ENCODE measurements at regions of chr6 and their contacts with region 1.

Region 1: DNA sequence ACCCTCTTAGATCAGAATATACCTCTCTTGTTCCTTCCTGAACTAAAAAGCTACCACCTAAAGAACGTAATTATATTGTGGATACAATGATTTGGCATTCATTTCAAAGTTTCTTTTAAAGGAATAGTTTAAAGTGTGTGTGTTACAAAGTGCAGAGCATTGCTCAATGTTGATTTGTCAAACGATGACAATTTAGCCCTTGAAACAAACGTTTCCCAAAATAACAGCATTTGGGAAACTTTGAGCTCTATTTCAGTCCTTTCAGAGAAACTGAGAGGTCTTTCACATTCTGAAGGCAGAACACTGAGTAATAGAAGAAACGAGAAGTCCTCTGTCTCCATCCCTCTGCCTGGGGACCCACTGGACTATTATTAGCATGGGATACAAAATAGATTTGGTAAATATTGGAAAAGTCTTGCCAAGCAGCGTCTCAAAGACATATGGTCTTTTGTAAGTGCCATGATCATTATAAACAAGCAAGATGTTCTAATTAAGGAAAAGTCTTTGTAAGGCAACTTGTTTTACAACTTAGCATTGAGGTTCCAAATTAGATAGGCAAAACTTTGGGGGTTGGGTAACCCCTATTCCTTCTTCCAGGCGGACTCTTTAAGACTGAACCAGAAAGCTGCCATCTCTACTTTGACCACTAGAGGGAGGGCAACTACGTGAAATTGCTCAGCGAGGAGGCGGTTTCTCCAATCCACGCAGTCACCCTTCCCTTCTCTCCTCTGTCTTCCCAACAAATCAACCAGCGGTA is 208.8 kb downstream of the RNF144B start:
- DNase-seq: no peak
- ATAC-seq: peak; percentile 77

Region 2: DNA sequence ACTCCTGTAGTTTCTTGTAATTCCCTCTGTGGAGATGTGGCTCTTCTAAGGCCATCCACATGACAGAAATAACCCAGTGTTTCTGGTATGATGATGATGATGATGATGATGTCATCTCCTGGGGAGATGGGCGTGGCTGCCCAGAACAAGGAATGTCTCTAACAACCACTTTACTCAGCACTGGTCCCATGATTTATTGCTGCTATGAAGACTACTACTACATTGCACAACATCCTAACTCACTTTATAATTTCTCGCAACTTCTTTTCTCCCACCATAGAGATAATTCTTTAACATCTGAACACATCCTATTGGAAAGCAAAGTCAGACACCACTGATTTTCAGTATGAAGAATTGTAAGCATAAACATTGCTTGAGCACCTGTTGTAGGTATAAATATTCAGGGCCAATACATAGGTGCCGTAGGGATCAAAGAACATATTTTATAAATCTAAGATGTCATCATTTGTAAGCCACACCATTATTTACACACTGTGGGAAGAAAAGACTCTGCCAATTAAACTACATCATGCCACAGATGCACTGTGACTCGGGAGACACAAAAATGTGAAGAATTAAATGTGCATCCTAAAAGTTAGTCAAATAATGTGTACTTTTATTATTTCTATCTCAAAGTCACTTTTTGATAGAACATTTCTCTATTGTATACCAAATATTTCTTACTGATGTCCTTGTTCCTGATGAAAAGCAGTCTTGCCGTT is 447.5 kb before region 1 on chr6:
- intact Hi-C with region 1: no loop called
- DNase-seq: no peak
- ATAC-seq: no peak

Region 3: DNA sequence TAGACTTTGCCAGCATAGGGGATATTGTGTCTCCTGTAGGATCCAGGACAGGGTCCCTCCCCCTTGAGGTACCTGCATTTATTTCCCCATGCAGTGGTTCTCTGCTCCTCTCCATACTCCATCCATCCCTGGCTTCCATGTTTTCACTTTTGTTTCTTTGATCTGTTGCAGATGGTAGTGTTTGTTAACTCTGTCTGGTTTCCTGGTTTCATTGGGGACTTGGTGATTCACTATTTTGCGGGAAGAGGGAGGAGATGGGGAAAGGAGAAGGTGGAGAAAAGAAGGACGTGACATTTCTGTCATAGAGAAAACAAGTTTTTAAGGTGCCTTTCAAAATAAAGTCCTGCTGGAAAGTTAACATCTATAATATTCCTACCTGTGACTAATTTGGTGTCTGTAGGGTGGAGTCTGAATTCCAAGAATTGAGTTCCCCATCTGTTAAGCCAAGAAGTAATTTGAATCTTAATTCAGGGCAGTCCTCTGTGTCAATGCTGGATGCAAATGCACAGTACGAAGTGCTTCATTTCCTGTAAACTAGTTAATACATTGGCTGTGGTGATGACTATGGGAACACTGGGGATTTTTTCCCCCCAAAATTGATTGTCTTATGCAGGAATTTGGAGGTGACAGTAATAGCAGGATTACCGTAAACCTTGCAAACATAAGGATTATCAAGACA is 215.7 kb before region 1 on chr6:
- intact Hi-C with region 1: no loop called
- DNase-seq: no peak
- ATAC-seq: no peak

Region 4: GRCh38 chr6:18720075-18720474 is 124.1 kb after region 1 on chr6:
- intact Hi-C with region 1: no loop called
- DNase-seq: no peak
- ATAC-seq: no peak

Region 5: GRCh38 chr6:18763086-18763485 is 167.1 kb after region 1 on chr6:
- intact Hi-C with region 1: no loop called
- DNase-seq: no peak
- ATAC-seq: no peak

Region 6: DNA sequence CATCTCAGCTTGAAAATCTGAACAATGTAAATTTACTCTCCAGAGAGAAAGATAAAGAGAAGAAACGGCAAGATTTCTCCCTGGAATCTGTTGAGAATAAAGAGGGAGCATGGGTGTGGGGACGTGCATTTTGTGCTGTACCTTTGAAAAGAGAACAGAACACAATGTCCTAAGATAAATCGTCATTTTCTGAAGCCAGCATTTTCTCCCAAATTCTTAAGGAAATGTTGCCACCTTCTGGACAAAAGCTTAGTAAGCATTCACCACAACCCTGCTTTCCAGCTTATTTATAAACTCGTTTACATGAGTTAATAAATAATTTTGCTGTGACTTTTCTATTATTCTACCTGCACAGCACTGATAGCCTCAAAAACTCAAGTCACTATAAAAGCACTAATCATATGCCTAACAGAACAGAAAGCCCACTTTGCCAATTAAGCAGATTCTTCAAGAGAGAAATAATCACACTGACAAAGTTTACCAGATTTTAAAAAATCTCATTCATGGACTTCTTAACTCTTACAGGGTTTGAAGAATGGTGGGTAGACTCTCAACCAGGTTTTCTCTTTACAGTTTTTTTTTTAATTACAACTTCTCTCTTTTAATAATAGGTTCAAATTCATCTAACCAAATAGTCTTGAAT is 1460.5 kb after region 1 on chr6:
- intact Hi-C with region 1: loop called (anchors 10 kb)
- DNase-seq: no peak
- ATAC-seq: no peak

Measured in left ventricle myocardium superior (tissue), 1 donor.